CD8-positive, alpha-beta T cell (primary cell): ENCODE measurements at regions of chr1 and their contacts with region 1.

Region 1: GRCh38 chr1:53278201-53278725 is 39.9 kb upstream of the MAGOH start:
- DNase-seq: peak; percentile 51 to 86 (median 66)
- ATAC-seq: peak; percentile 81
- H3K4me3 ChIP-seq: no peak overlapping the region
- H3K4me3 Mint-ChIP-seq: no peak overlapping the region
- H3K27ac ChIP-seq: no peak overlapping the region
- H3K27ac Mint-ChIP-seq: no peak overlapping the region
- H3K4me1 ChIP-seq: no peaks in the 10 kb centered on the region
- H3K4me1 Mint-ChIP-seq: peaks cover 2% of the 10 kb centered on the region
- H3K27me3 ChIP-seq: no peaks in the 10 kb centered on the region
- H3K27me3 Mint-ChIP-seq: no peaks in the 10 kb centered on the region
- CTCF ChIP-seq: peak; percentile 94

Region 2: GRCh38 chr1:52629325-52629643 is 649.0 kb before region 1 on chr1:
- CTCF ChIA-PET with region 1: no interaction called
- POLR2A ChIA-PET with region 1: no interaction called
- intact Hi-C with region 1: no loop called
- DNase-seq: no peak
- ATAC-seq: no peak
- H3K4me3 ChIP-seq: no peak overlapping the region
- H3K4me3 Mint-ChIP-seq: no peak overlapping the region
- H3K27ac ChIP-seq: no peak overlapping the region
- H3K27ac Mint-ChIP-seq: no peak overlapping the region
- H3K4me1 ChIP-seq: peaks cover 33% of the 10 kb centered on the region
- H3K4me1 Mint-ChIP-seq: peaks cover 58% of the 10 kb centered on the region
- H3K27me3 ChIP-seq: no peaks in the 10 kb centered on the region
- H3K27me3 Mint-ChIP-seq: no peaks in the 10 kb centered on the region
- CTCF ChIP-seq: no peak

Region 3: GRCh38 chr1:53196485-53197270 is 81.6 kb before region 1 on chr1 and contains the start of gene CPT2:
- CTCF ChIA-PET with region 1: no interaction called
- POLR2A ChIA-PET with region 1: no interaction called
- intact Hi-C with region 1: no loop called
- DNase-seq: peak; percentile 75 to 95 (median 92)
- ATAC-seq: peak; percentile 94
- H3K4me3 ChIP-seq: peak within 1 kb of the TSS; percentile 79 to 80
- H3K4me3 Mint-ChIP-seq: peak within 1 kb of the TSS; percentile 97
- H3K27ac ChIP-seq: peak within 1 kb of the TSS; percentile 95 to 96
- H3K27ac Mint-ChIP-seq: peak within 1 kb of the TSS; percentile 96
- H3K4me1 ChIP-seq: peaks cover 22% of the 10 kb centered on the region
- H3K4me1 Mint-ChIP-seq: peaks cover 38% of the 10 kb centered on the region
- H3K27me3 ChIP-seq: no peaks in the 10 kb centered on the region
- H3K27me3 Mint-ChIP-seq: no peaks in the 10 kb centered on the region
- CTCF ChIP-seq: no peak
- total RNA-seq, gene CPT2: 7.8 to 8.2 TPM

Region 4: GRCh38 chr1:53294567-53294966 is 16.3 kb after region 1 on chr1:
- CTCF ChIA-PET with region 1: interaction called, 55 read pairs
- POLR2A ChIA-PET with region 1: no interaction called
- intact Hi-C with region 1: no loop called
- DNase-seq: peak in 2 of 9 experiments; percentile 29 to 50
- ATAC-seq: peak; percentile 69
- H3K4me3 ChIP-seq: no peak overlapping the region
- H3K4me3 Mint-ChIP-seq: no peak overlapping the region
- H3K27ac ChIP-seq: peak overlapping the region in 1 of 2 experiments; percentile 22
- H3K27ac Mint-ChIP-seq: no peak overlapping the region
- H3K4me1 ChIP-seq: peaks cover 15% of the 10 kb centered on the region
- H3K4me1 Mint-ChIP-seq: peaks cover 27% of the 10 kb centered on the region
- H3K27me3 ChIP-seq: no peaks in the 10 kb centered on the region
- H3K27me3 Mint-ChIP-seq: no peaks in the 10 kb centered on the region
- CTCF ChIP-seq: no peak

Region 5: DNA sequence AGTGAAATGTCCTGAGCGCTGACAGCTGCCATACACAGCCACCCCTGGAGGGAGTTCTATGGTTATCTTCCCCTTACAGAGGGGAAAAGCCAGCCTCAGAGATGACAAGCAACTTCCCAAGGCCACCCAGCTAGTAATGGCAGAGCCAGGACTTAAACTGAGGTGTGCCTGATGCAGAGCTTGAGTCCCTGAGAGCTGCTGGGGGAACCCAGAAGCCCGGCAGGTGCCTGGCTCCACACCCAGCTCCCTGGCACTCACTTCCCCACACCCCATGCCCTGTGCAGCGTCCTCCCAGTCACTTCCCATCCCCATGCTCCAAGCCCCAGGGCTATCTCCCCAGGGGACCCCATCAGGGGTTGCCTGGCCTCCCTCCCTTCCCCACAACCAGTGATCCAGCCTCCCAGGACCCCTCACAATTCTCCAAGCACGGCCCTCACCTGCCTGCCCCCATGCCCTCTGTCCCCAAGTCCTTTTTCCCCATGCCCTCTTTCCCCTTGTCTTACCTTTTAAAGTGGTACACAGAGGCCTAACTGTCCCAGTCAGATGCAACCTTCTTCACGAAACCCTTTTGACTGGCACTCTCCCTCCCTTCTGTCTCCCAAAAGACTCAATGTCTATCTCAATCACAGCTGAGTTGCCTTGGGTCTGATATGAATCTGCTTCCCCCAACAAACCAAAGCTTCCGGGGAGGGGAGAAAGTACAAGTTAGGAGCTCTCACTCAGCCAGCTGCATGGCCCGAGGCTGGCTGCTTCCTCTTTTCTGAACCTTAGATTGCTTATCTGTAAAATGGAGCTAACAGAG is 89.4 kb after region 1 on chr1:
- CTCF ChIA-PET with region 1: interaction called, 11 read pairs
- POLR2A ChIA-PET with region 1: no interaction called
- intact Hi-C with region 1: no loop called
- DNase-seq: peak in 8 of 9 experiments; percentile 20 to 67 (median 39)
- ATAC-seq: peak; percentile 77
- H3K4me3 ChIP-seq: peak overlapping the region; percentile 21 to 36
- H3K4me3 Mint-ChIP-seq: peak overlapping the region; percentile 87
- H3K27ac ChIP-seq: peak overlapping the region in 1 of 2 experiments; percentile 62
- H3K27ac Mint-ChIP-seq: peak overlapping the region; percentile 92
- H3K4me1 ChIP-seq: peaks cover 19% of the 10 kb centered on the region
- H3K4me1 Mint-ChIP-seq: peaks cover 26% of the 10 kb centered on the region
- H3K27me3 ChIP-seq: no peaks in the 10 kb centered on the region
- H3K27me3 Mint-ChIP-seq: no peaks in the 10 kb centered on the region
- CTCF ChIP-seq: no peak

Region 6: DNA sequence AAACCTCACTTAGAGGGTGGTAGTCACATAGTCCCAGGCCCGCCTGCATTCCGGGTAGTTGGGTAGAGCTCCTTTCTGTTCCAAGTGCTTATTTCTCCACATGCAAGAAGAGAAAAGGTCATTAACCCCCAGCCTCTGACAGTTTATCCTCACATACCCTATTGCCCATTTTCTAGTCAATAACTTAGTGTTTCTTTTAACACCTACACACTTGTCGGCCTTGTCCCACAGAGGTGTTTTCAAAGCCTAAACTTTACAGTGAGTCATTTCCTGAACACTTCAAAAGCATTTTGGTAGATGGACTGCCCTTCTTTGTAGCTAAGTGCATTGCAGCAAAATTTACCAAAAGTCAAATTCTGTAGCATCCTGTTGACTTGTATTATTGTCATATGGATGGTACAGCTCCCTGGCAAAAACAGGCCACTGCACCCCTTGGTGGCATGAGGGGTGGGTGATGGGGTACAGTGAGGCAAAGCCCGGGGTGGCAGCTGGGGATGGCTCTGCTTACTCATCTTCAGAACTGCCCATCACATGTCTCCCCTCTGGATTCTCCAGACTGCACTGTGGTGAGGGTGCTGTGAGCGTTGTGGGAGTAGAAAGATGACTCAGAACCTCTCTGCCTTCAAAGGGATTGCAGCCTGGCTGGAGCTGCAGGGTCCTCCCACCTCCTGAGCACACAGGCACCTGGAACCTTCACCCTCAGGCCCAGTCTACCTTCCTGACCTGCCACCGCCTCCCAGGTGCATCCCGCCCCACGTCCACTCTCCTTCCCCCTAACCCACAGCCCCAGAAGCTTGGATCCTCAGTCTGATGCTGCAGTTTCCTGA is 135.1 kb after region 1 on chr1:
- CTCF ChIA-PET with region 1: interaction called, 458 read pairs
- POLR2A ChIA-PET with region 1: no interaction called
- intact Hi-C with region 1: no loop called
- DNase-seq: peak in 8 of 9 experiments; percentile 44 to 86 (median 70)
- ATAC-seq: peak; percentile 65
- H3K4me3 ChIP-seq: no peak overlapping the region
- H3K4me3 Mint-ChIP-seq: peak overlapping the region; percentile 59
- H3K27ac ChIP-seq: peak overlapping the region; percentile 57 to 93
- H3K27ac Mint-ChIP-seq: peak overlapping the region; percentile 97
- H3K4me1 ChIP-seq: peaks cover 38% of the 10 kb centered on the region
- H3K4me1 Mint-ChIP-seq: peaks cover 62% of the 10 kb centered on the region
- H3K27me3 ChIP-seq: no peaks in the 10 kb centered on the region
- H3K27me3 Mint-ChIP-seq: no peaks in the 10 kb centered on the region
- CTCF ChIP-seq: no peak

Region 7: GRCh38 chr1:53681977-53682685 is 403.9 kb after region 1 on chr1:
- CTCF ChIA-PET with region 1: interaction called, 10 read pairs
- POLR2A ChIA-PET with region 1: no interaction called
- intact Hi-C with region 1: loop called in 1 of 2 experiments (anchors 2 kb)
- DNase-seq: peak; percentile 5 to 68 (median 40)
- ATAC-seq: peak; percentile 62
- H3K4me3 ChIP-seq: peak overlapping the region in 1 of 2 experiments; percentile 2
- H3K4me3 Mint-ChIP-seq: peak overlapping the region; percentile 67
- H3K27ac ChIP-seq: no peak overlapping the region
- H3K27ac Mint-ChIP-seq: no peak overlapping the region
- H3K4me1 ChIP-seq: peaks cover 10% of the 10 kb centered on the region
- H3K4me1 Mint-ChIP-seq: peaks cover 11% of the 10 kb centered on the region
- H3K27me3 ChIP-seq: no peaks in the 10 kb centered on the region
- H3K27me3 Mint-ChIP-seq: peaks cover 9% of the 10 kb centered on the region
- CTCF ChIP-seq: peak; percentile 45